ENCODE measurements at regions of chr21 and their contacts with region 1.

Region 1: GRCh38 chr21:34073032-34073869 is at the starts of genes MRPS6 and SLC5A3:
- DNase-seq: peak; percentile 91 to 94
- ATAC-seq: peak; percentile 91
- H3K4me3 ChIP-seq: peak within 1 kb of the TSS; percentile 93 to 100
- H3K27ac ChIP-seq: peak within 1 kb of the TSS; percentile 63 to 96
- H3K4me1 ChIP-seq: peaks cover 0 to 3% of the 10 kb centered on the region in 2 donors
- H3K27me3 ChIP-seq: no peaks in the 10 kb centered on the region
- total RNA-seq, gene MRPS6: 78.4 to 137 TPM
- total RNA-seq, gene SLC5A3: 25.2 to 82.3 TPM

Region 2: DNA sequence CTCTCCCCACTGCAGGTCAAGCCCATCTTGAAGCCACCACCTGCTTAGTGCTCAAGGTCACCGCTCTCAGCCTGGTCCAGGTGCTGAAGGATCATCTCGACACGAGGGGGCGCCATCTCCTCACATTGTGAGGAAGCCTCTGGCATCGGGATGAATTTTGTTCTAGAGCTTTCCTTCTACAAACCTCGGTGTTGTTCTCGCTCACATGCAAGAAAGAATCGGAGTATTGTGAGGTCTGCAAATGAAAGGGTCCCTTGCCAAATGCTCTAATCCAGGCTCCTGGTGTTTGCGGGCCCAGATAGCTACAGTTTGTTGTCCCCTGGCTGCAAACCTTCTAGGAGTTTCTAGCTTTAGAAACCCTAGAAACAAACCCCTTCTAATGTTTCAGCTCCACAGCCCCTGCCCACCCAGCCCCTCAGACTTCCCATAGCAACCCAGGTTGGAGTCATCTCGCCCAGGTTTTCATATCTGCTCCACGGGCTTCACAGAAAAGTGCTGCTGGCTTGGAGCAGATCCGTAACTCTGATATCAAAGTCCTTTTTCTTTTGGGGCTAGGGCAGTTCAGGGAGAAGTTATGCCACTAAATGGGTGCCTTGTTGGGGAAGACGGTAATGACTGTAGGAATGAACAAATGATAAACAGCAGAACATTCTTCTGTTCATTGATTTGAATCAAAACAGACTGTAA is 149.0 kb before region 1 on chr21:
- intact Hi-C with region 1: loop called in 1 of 2 experiments (anchors 2 kb)
- DNase-seq: peak; percentile 91 to 97
- ATAC-seq: peak; percentile 94
- H3K4me3 ChIP-seq: no peak overlapping the region
- H3K27ac ChIP-seq: no peak overlapping the region
- H3K4me1 ChIP-seq: no peaks in the 10 kb centered on the region
- H3K27me3 ChIP-seq: no peaks in the 10 kb centered on the region

Region 3: DNA sequence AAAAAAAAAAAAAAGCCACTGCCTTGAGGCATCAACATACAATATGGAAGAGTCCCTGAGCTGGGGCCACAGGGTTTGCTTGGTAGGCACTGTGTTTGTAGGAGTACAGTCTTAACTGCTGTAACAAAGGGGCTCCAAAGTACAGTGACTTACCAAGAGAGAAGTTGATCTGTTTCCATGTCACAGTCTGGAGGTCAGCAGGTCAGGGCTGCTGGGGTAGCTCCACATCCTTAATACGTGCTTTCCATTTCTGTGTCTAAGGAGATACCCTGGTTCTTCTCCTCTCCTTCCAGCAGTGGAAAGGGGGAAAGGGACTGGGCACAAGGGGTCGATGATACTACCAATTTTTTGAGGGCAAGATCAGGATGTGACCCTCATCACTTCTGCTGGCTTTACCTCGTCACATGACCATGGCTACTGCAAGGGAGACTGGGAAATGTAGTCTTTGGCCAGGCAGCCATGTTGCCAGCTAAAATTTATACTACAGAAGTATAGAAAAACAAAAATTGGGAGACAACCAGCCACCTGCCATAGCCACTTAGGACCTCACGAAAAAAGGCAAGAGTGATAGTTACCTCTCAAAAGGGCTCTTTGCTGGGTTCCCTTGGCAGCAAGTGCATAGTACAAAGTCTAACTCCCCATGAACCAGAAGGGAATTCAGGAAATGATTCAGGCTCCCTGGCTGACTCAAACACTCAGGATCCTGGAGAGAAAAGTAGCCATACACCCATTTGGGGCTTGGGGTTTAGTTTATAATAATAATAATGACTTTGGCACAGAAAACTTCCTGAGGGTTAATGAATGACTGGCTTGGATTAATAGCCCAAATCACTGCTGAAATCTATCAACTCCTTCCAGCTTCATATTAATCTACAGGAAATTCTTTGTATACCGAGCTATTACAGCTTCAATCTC is 104.9 kb before region 1 on chr21:
- intact Hi-C with region 1: loop called in 1 of 2 experiments (anchors 5 kb)
- DNase-seq: no peak
- ATAC-seq: peak; percentile 85
- H3K4me3 ChIP-seq: no peak overlapping the region
- H3K27ac ChIP-seq: peak overlapping the region; percentile 22 to 87
- H3K4me1 ChIP-seq: peaks cover 0 to 7% of the 10 kb centered on the region in 2 donors
- H3K27me3 ChIP-seq: no peaks in the 10 kb centered on the region

Region 4: GRCh38 chr21:34037009-34037795 is 36.0 kb before region 1 on chr21:
- intact Hi-C with region 1: no loop called
- DNase-seq: no peak
- ATAC-seq: no peak
- H3K4me3 ChIP-seq: no peak overlapping the region
- H3K27ac ChIP-seq: no peak overlapping the region
- H3K4me1 ChIP-seq: no peaks in the 10 kb centered on the region
- H3K27me3 ChIP-seq: no peaks in the 10 kb centered on the region

Measured in aorta (tissue), 5 donors.